Caco-2 (cell line): ENCODE measurements at regions of chr2 and their contacts with region 1.

Region 1: GRCh38 chr2:205947621-205948495 is 138.1 kb downstream of the INO80D start:
- DNase-seq: peak; percentile 69 to 79
- H3K4me3 ChIP-seq: no peak overlapping the region
- H3K4me3 Mint-ChIP-seq: no peak overlapping the region
- H3K27ac Mint-ChIP-seq: no peak overlapping the region
- H3K4me1 ChIP-seq: peaks cover 32% of the 10 kb centered on the region
- H3K4me1 Mint-ChIP-seq: peaks cover 9% of the 10 kb centered on the region
- H3K27me3 ChIP-seq: no peaks in the 10 kb centered on the region
- H3K27me3 Mint-ChIP-seq: no peaks in the 10 kb centered on the region
- CTCF ChIP-seq: peak; percentile 90 to 93

Region 2: GRCh38 chr2:205776139-205776538 is 171.7 kb before region 1 on chr2:
- CTCF ChIA-PET with region 1: no interaction called
- POLR2A ChIA-PET with region 1: no interaction called
- intact Hi-C with region 1: loop called (anchors 2 kb)
- DNase-seq: peak; percentile 71 to 74
- H3K4me3 ChIP-seq: no peak overlapping the region
- H3K4me3 Mint-ChIP-seq: no peak overlapping the region
- H3K27ac Mint-ChIP-seq: no peak overlapping the region
- H3K4me1 ChIP-seq: peaks cover 12% of the 10 kb centered on the region
- H3K4me1 Mint-ChIP-seq: peaks cover 4% of the 10 kb centered on the region
- H3K27me3 ChIP-seq: no peaks in the 10 kb centered on the region
- H3K27me3 Mint-ChIP-seq: no peaks in the 10 kb centered on the region
- CTCF ChIP-seq: peak; percentile 68 to 80

Region 3: DNA sequence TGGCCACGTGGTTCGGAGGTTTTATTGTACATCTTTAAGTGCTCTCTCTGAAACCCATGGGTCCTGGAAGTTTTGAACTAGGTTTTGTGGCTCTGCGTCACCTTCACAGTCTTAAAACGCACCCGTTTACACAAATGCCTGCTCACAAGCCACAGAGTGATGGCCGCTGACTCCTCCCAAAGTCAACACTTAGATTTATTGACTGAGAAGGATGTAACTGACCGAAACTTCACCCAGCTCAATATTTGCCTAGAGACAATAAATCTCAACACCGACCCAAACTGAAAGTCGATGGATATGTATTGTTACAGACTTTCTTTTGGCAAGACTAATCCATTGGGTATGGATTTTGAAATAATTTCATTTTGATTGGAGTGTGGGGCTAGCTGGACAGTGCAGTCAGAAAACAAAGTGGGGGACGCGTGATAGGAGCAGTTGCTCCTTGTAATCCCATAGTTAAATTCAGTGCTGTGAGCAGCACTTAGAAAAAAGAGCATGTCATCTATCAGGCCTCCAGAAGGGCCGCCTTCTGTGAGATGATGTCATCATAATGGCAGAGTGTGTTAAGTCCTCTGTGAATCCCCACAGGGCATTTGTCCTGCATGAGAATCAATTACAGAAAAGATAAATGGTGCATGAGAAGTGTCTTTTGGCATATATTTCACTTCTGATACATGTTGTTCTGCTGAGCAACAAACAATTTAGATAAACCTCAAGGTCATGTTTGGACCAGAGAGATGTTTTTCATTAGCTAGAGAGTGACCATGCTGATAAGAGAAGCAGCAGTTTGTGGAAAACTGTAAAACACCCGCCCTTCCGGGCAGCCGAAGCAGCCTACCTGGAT is 45.6 kb before region 1 on chr2:
- CTCF ChIA-PET with region 1: no interaction called
- POLR2A ChIA-PET with region 1: no interaction called
- intact Hi-C with region 1: loop called (anchors 1 kb)
- DNase-seq: peak; percentile 65 to 74
- H3K4me3 ChIP-seq: 0 out of 2 replicates have a peak overlapping the region, but pooled peaks have one; percentile 0
- H3K4me3 Mint-ChIP-seq: peak overlapping the region; percentile 64
- H3K27ac Mint-ChIP-seq: peak overlapping the region; percentile 84
- H3K4me1 ChIP-seq: peaks cover 22% of the 10 kb centered on the region
- H3K4me1 Mint-ChIP-seq: peaks cover 17% of the 10 kb centered on the region
- H3K27me3 ChIP-seq: no peaks in the 10 kb centered on the region
- H3K27me3 Mint-ChIP-seq: no peaks in the 10 kb centered on the region
- CTCF ChIP-seq: no peak

Region 4: DNA sequence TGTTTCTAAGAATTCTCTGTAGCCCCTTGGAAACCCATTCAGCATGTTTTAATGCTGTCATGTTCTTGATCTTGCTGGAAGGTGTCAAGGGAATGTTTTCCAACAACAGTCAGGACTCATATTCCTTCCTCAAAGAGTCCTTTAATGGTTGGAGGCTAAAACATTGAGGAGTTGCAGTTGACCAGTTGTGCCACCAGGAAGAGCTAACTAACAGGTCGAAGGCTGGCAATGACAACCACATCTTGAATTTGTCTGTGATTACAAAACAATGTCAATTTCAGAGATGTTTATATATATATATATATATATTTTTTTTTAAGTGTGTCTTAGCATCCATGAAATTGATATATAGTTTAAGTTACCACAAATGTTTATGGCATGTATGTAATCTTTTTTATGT is 13.4 kb before region 1 on chr2:
- CTCF ChIA-PET with region 1: interaction called, 9 read pairs
- POLR2A ChIA-PET with region 1: no interaction called
- intact Hi-C with region 1: loop called (anchors 1 kb)
- DNase-seq: no peak
- H3K4me3 ChIP-seq: no peak overlapping the region
- H3K4me3 Mint-ChIP-seq: peak overlapping the region; percentile 21
- H3K27ac Mint-ChIP-seq: peak overlapping the region; percentile 80
- H3K4me1 ChIP-seq: peaks cover 40% of the 10 kb centered on the region
- H3K4me1 Mint-ChIP-seq: peaks cover 47% of the 10 kb centered on the region
- H3K27me3 ChIP-seq: no peaks in the 10 kb centered on the region
- H3K27me3 Mint-ChIP-seq: no peaks in the 10 kb centered on the region
- CTCF ChIP-seq: peak in 1 of 2 experiments; percentile 18

Region 5: GRCh38 chr2:205975082-205975949 is 27.5 kb after region 1 on chr2:
- CTCF ChIA-PET with region 1: interaction called, 13 read pairs
- POLR2A ChIA-PET with region 1: no interaction called
- intact Hi-C with region 1: loop called (anchors 1 kb)
- DNase-seq: peak; percentile 80 to 87
- H3K4me3 ChIP-seq: no peak overlapping the region
- H3K4me3 Mint-ChIP-seq: peak overlapping the region; percentile 66
- H3K27ac Mint-ChIP-seq: peak overlapping the region; percentile 83
- H3K4me1 ChIP-seq: peaks cover 41% of the 10 kb centered on the region
- H3K4me1 Mint-ChIP-seq: peaks cover 20% of the 10 kb centered on the region
- H3K27me3 ChIP-seq: no peaks in the 10 kb centered on the region
- H3K27me3 Mint-ChIP-seq: no peaks in the 10 kb centered on the region
- CTCF ChIP-seq: no peak